Endothelial cell of umbilical vein (primary cell): ENCODE measurements at regions of chr12 and their contacts with region 1.

Region 1: DNA sequence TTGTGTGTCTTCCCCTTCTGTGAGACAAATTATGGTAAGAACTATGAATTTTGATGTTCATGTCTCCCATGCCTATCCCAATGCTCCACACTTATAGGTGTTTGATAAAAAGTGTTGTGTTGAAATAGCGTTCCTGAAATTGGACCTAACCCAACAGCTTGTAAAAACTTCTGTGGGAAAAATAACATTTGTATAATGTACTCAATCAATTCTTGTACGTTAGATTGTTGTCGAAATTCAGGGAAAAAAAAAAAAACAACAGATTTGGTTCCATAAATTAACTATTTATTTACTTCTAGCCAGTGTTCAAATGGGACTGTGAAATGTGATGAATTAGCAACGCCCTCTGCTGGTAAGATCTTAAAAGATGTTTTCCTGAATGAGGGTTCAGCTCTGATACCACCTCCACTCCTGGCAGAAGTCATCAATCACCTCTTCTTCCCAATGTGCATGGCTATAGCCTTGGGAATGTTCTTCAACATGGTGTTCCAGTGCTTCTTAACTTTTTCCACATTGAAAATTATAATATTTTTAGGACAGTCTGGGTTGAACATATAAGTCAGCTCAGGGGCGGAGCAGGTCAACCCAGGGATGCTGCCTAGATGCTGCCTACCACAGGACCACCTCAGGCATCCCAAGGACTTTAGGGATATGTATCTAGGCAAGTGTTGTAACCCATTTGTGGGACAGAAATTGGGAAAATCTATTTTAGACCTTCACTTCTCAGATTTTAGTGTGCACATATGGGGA is 170.6 kb downstream of the OTOGL start:
- DNase-seq: peak; percentile 69
- H3K4me3 ChIP-seq: no peak overlapping the region
- H3K27ac ChIP-seq: peak overlapping the region; percentile 81
- H3K4me1 ChIP-seq: peaks cover 18% of the 10 kb centered on the region
- H3K27me3 ChIP-seq: no peaks in the 10 kb centered on the region
- CTCF ChIP-seq: peak; percentile 46 to 47
- POLR2A ChIP-seq: no peak

Region 2: DNA sequence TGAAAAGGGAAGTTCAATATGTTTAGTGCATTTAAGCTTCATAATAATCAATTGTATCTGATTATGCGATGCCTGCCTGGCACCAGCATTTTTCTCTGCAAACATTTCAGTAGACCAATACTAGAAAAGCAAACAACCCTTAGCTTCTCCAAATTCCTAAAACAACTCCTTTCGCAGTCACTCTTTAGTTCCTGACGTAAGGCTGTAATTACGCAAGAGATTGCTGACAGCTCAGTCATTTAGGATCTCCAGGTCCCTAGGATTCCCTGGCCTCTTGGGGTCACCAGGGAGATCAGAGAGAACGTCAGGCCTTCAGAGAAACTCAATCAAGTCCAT is 969.8 kb before region 1 on chr12:
- CTCF ChIA-PET with region 1: no interaction called
- POLR2A ChIA-PET with region 1: no interaction called
- dilution Hi-C with region 1: no loop called
- intact Hi-C with region 1: no loop called
- DNase-seq: no peak
- H3K4me3 ChIP-seq: no peak overlapping the region
- H3K27ac ChIP-seq: no peak overlapping the region
- H3K4me1 ChIP-seq: peaks cover 36% of the 10 kb centered on the region
- H3K27me3 ChIP-seq: no peaks in the 10 kb centered on the region
- CTCF ChIP-seq: no peak
- POLR2A ChIP-seq: no peak

Region 3: GRCh38 chr12:79420146-79420618 is 849.8 kb before region 1 on chr12:
- CTCF ChIA-PET with region 1: interaction called, 10 read pairs
- POLR2A ChIA-PET with region 1: no interaction called
- dilution Hi-C with region 1: no loop called
- intact Hi-C with region 1: loop called (anchors 2 kb)
- DNase-seq: peak; percentile 93
- H3K4me3 ChIP-seq: no peak overlapping the region
- H3K27ac ChIP-seq: peak overlapping the region; percentile 97
- H3K4me1 ChIP-seq: peaks cover 54% of the 10 kb centered on the region
- H3K27me3 ChIP-seq: no peaks in the 10 kb centered on the region
- CTCF ChIP-seq: peak; percentile 47 to 63
- POLR2A ChIP-seq: peak; percentile 9

Region 4: DNA sequence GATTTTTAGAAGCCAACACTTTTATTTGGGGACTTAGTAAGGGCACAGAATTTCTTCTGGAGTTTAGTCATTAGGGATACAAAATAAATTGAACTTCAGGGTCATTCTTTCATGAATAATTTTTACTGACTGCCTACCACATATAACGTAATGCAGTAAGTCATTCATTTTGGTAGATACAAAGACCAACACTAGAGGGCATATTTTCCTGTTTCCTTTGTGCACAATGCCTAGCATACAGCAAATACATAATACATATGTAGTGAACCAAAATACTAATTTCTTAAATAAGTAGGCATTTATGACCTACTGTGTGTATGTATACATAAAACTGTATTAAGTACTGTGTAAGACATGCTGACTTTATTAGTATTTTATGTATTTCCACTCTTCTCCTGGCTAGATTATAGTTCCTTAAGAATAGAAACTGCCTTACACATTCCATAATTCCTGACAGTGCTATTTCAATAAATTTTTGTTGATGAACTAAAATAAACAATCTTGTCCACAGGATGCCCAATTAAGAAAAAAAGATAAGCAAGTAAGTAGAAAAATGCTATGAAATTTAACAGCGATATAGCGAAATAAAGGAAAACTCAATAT is 383.0 kb before region 1 on chr12:
- CTCF ChIA-PET with region 1: interaction called, 10 read pairs
- POLR2A ChIA-PET with region 1: no interaction called
- dilution Hi-C with region 1: no loop called
- intact Hi-C with region 1: loop called (anchors 2 kb)
- DNase-seq: peak; percentile 77
- H3K4me3 ChIP-seq: no peak overlapping the region
- H3K27ac ChIP-seq: peak overlapping the region; percentile 3
- H3K4me1 ChIP-seq: peaks cover 30% of the 10 kb centered on the region
- H3K27me3 ChIP-seq: no peaks in the 10 kb centered on the region
- CTCF ChIP-seq: peak; percentile 33 to 39
- POLR2A ChIP-seq: no peak

Region 5: DNA sequence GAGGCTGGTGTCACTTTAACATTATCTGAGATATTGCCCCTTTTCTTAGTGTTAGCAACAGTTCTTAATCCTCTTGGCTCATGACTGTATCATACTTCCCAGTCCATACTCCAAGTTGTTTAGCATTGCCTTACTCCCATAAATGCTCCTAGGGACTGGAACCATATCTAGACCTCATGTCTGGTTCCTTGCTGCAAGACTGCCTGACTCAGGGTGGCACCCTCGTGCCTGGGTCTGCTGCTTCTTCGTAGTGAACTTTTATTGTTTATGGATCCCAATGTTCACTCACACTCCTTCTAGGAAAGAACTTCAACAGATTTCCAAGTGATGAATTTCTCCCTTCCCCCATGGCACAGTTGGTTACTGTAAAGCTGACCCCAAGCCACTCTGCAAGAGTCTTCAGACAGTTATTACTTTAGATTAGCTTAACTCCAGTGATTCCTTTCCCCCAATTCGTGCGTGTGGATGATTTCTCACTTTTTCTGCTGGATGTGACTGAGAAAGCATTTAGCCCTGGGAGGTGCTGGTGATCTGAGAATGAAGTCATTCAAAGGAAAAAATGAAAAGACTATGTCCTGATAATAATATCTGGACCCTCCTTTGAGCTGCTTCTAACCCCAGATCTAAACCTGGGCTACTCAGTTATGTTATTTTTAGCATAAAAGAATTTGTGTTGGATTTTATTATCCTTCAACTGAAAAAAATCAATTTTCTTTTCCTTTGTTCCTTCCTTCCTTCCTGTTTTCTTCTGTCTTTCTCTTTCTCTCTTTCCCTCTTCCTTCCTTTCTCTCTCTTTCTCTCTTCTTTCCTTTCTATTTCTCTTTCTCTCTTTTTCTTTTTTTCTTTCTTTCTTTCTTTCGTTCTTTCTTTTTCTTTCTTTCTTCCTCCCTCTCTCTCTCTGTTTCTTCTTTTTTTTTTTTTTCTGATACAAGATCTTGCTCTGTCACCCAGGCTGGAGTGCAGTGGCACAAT is 287.6 kb before region 1 on chr12:
- CTCF ChIA-PET with region 1: no interaction called
- POLR2A ChIA-PET with region 1: no interaction called
- dilution Hi-C with region 1: no loop called
- intact Hi-C with region 1: no loop called
- DNase-seq: no peak
- H3K4me3 ChIP-seq: no peak overlapping the region
- H3K27ac ChIP-seq: no peak overlapping the region
- H3K4me1 ChIP-seq: no peaks in the 10 kb centered on the region
- H3K27me3 ChIP-seq: peaks cover 3 to 6% of the 10 kb centered on the region in 2 experiments
- CTCF ChIP-seq: no peak
- POLR2A ChIP-seq: no peak

Region 6: GRCh38 chr12:80195074-80195726 is 74.8 kb before region 1 on chr12:
- CTCF ChIA-PET with region 1: interaction called, 641 read pairs
- POLR2A ChIA-PET with region 1: interaction called, 3 read pairs
- dilution Hi-C with region 1: no loop called
- intact Hi-C with region 1: loop called (anchors 1 kb)
- DNase-seq: peak; percentile 79
- H3K4me3 ChIP-seq: no peak overlapping the region
- H3K27ac ChIP-seq: no peak overlapping the region
- H3K4me1 ChIP-seq: no peaks in the 10 kb centered on the region
- H3K27me3 ChIP-seq: no peaks in the 10 kb centered on the region
- CTCF ChIP-seq: peak; percentile 70 to 74
- POLR2A ChIP-seq: no peak

Region 7: GRCh38 chr12:80222261-80222660 is 47.7 kb before region 1 on chr12:
- CTCF ChIA-PET with region 1: interaction called, 12 read pairs
- POLR2A ChIA-PET with region 1: no interaction called
- dilution Hi-C with region 1: no loop called
- intact Hi-C with region 1: loop called (anchors 1 kb)
- DNase-seq: peak; percentile 90
- H3K4me3 ChIP-seq: peak overlapping the region in 1 of 3 experiments; percentile 26
- H3K27ac ChIP-seq: peak overlapping the region; percentile 94
- H3K4me1 ChIP-seq: peaks cover 40% of the 10 kb centered on the region
- H3K27me3 ChIP-seq: no peaks in the 10 kb centered on the region
- CTCF ChIP-seq: no peak
- POLR2A ChIP-seq: peak; percentile 21

Region 8: DNA sequence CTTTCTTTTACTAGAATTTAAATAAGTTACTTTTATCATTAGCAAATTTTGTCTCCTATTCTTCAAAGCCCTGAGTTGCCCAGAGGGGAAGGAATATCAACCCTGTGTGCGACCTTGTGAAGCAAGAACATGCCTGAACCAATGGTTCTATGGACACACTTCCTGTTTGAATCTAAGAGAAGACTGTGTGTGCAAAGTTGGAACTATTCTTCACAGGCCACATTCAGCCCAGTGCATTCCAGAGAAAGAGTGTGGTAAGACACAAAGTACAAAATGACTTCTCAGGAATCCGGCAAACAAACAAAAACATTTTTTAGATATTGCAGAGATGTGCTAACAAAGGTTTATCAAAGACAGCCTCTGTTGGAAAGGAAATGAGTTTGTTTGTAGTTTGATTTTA is 83.3 kb after region 1 on chr12:
- CTCF ChIA-PET with region 1: no interaction called
- POLR2A ChIA-PET with region 1: no interaction called
- dilution Hi-C with region 1: no loop called
- intact Hi-C with region 1: loop called (anchors 1 kb)
- DNase-seq: peak; percentile 49
- H3K4me3 ChIP-seq: no peak overlapping the region
- H3K27ac ChIP-seq: peak overlapping the region; percentile 58
- H3K4me1 ChIP-seq: peaks cover 51% of the 10 kb centered on the region
- H3K27me3 ChIP-seq: no peaks in the 10 kb centered on the region
- CTCF ChIP-seq: no peak
- POLR2A ChIP-seq: no peak